ENCODE measurements at regions of chr9 and their contacts with region 1.

Region 1: GRCh38 chr9:24127519-24127918 is 301.5 kb upstream of the ELAVL2 start:
- DNase-seq: no peak
- ATAC-seq: no peak
- H3K4me3 ChIP-seq: no peak overlapping the region
- H3K27ac ChIP-seq: no peak overlapping the region
- H3K4me1 ChIP-seq: no peaks in the 10 kb centered on the region
- H3K27me3 ChIP-seq: no peaks in the 10 kb centered on the region
- CTCF ChIP-seq: no peak
- POLR2A ChIP-seq: no peak
- RAD21 ChIP-seq: no peak

Region 2: GRCh38 chr9:24059651-24060050 is 67.9 kb before region 1 on chr9:
- CTCF ChIA-PET with region 1: no interaction called
- POLR2A ChIA-PET with region 1: no interaction called
- RAD21 ChIA-PET with region 1: no interaction called
- intact Hi-C with region 1: loop called (anchors 2 kb)
- DNase-seq: no peak
- ATAC-seq: no peak
- H3K4me3 ChIP-seq: no peak overlapping the region
- H3K27ac ChIP-seq: no peak overlapping the region
- H3K4me1 ChIP-seq: no peaks in the 10 kb centered on the region
- H3K27me3 ChIP-seq: no peaks in the 10 kb centered on the region
- CTCF ChIP-seq: no peak
- POLR2A ChIP-seq: no peak
- RAD21 ChIP-seq: no peak

Region 3: GRCh38 chr9:24096756-24097155 is 30.8 kb before region 1 on chr9:
- CTCF ChIA-PET with region 1: no interaction called
- POLR2A ChIA-PET with region 1: no interaction called
- RAD21 ChIA-PET with region 1: no interaction called
- intact Hi-C with region 1: no loop called
- DNase-seq: no peak
- ATAC-seq: no peak
- H3K4me3 ChIP-seq: no peak overlapping the region
- H3K27ac ChIP-seq: no peak overlapping the region
- H3K4me1 ChIP-seq: no peaks in the 10 kb centered on the region
- H3K27me3 ChIP-seq: no peaks in the 10 kb centered on the region
- CTCF ChIP-seq: no peak
- POLR2A ChIP-seq: no peak
- RAD21 ChIP-seq: no peak

Region 4: DNA sequence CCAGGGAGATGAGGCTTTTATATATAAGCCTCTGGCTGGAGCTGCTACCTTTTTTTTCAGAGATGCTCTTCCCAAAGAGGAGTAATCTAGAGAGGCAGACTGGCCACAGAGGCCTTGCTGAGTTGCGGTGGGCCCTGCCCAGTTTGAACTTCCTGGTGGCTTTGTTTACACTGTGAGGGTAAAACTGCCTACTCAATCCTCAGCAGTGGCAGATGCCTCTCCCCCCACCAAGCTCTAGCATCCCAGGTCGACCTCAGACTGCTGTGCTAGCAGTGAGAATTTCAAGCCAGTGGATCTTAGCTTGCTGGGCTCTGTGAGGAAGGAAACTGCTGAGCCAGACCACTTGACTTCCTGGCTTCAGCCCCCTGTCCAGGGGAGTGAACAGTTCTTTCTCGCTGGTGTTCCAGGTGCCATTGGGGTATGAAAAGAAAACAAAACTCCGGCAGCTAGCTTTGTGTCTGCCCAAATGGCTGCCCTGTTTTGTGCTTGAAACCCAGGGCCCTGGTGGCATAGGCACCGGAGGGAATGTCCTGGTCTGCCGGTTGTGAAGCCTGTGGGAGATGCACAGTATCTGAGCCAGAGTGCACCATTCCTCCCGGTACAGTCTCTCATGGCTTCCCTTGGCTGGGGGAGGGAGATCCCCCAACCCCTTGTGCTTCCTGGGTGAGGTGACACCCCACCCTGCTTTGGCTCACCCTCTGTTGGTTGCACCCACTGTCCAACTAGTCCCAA is 637.7 kb after region 1 on chr9:
- CTCF ChIA-PET with region 1: no interaction called
- POLR2A ChIA-PET with region 1: no interaction called
- RAD21 ChIA-PET with region 1: no interaction called
- intact Hi-C with region 1: no loop called
- DNase-seq: no peak
- ATAC-seq: no peak
- H3K4me3 ChIP-seq: no peak overlapping the region
- H3K27ac ChIP-seq: no peak overlapping the region
- H3K4me1 ChIP-seq: no peaks in the 10 kb centered on the region
- H3K27me3 ChIP-seq: no peaks in the 10 kb centered on the region
- CTCF ChIP-seq: no peak
- POLR2A ChIP-seq: no peak
- RAD21 ChIP-seq: no peak

Measured in HCT116 (cell line).